ENCODE measurements at regions of chr16 and their contacts with region 1.

Region 1: DNA sequence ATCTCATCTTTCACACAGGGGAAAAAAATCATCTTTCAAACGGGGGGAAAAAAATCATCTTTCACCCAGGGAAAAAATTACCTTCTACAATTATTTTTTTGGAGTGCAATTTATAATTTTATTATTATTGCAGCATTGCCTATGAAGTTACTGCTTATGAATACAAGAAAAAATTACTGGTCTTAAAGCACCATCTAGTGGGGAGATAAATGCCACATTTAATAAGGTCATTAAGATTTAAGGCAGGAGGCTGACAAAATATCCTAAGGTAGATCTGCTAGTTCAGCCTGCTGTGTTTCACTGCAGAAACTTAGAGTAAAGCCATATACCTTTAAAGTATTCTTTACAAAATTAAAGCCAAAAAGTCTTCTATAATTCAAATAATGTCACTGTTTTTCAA is 13.7 kb downstream of the SHCBP1 start:
- DNase-seq: no peak
- ATAC-seq: no peak
- H3K4me3 ChIP-seq: no peak overlapping the region
- H3K27ac ChIP-seq: no peak overlapping the region
- H3K4me1 ChIP-seq: no peaks in the 10 kb centered on the region
- H3K27me3 ChIP-seq: no peaks in the 10 kb centered on the region

Region 2: DNA sequence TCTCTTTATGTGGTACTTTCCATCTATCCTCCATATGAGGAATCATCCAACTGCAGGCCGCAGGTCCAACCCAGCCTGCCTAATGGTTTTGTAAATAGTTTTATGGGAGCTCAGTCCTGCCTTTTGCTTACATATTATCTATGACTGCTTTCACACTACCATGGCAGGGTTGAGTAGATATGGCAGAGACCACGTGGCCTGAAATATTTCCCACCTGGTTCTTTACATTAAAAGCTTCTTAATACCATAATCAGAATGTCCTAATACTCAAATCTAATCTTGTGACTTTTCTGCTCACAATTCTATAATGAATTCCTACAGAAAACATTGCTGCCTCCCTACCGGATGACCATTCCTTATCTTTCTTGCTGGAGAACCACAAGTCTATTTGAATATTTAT is 58.1 kb before region 1 on chr16:
- intact Hi-C with region 1: loop called in 3 of 4 experiments (anchors 5 to 10 kb)
- DNase-seq: no peak
- ATAC-seq: no peak
- H3K4me3 ChIP-seq: no peak overlapping the region
- H3K27ac ChIP-seq: no peak overlapping the region
- H3K4me1 ChIP-seq: no peaks in the 10 kb centered on the region
- H3K27me3 ChIP-seq: no peaks in the 10 kb centered on the region

Region 3: DNA sequence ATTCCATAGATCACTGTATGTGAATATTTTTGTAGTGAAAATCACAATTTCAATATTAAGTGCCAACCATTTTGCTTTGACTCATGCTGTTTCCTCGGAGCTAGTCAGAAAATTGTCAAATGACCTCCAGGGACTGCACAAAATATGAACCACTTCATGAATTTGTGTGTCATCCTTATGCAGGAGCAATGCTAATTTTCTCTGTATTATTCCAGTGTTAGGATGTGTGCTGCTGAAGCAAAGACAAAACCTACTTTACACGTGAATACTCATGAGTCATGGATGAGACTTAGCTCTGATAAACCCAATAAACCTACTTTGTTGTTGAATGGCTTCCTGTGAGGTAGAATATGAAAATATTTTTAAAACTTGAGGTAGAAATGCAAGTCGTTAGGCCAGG is 51.6 kb before region 1 on chr16:
- intact Hi-C with region 1: loop called in 3 of 4 experiments (anchors 5 to 10 kb)
- DNase-seq: no peak
- ATAC-seq: no peak
- H3K4me3 ChIP-seq: no peak overlapping the region
- H3K27ac ChIP-seq: no peak overlapping the region
- H3K4me1 ChIP-seq: no peaks in the 10 kb centered on the region
- H3K27me3 ChIP-seq: no peaks in the 10 kb centered on the region

Region 4: GRCh38 chr16:46649928-46650623 is 42.5 kb after region 1 on chr16:
- intact Hi-C with region 1: no loop called
- DNase-seq: no peak
- ATAC-seq: peak; percentile 59 to 74
- H3K4me3 ChIP-seq: no peak overlapping the region
- H3K27ac ChIP-seq: no peak overlapping the region
- H3K4me1 ChIP-seq: no peaks in the 10 kb centered on the region
- H3K27me3 ChIP-seq: no peaks in the 10 kb centered on the region